AG04449 (cell line): ENCODE measurements at regions of chr2 and their contacts with region 1.

Region 1: DNA sequence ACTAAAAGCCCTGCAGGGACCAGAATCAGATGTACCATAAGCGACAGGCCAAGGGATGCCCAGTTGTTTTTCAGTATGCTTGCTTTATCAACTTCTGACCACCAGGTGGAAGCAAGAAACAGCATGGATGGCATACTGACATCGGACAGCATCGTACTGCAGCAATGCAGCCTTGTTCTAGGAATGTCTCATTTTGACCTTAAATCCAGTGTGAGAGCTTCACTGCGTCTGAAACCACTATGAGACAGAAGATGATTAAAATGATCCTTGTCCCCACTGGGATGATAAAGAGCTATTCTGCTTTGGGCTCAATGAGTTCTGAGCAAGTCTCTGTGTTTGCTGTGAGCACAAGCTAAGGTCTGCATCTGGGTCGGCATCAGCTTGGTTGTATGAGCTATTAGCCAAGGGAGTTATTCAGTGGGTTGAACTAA is 54.3 kb downstream of the CDK15 start:
- DNase-seq: peak; percentile 54
- H3K4me3 ChIP-seq: no peak overlapping the region
- CTCF ChIP-seq: peak; percentile 83

Region 2: DNA sequence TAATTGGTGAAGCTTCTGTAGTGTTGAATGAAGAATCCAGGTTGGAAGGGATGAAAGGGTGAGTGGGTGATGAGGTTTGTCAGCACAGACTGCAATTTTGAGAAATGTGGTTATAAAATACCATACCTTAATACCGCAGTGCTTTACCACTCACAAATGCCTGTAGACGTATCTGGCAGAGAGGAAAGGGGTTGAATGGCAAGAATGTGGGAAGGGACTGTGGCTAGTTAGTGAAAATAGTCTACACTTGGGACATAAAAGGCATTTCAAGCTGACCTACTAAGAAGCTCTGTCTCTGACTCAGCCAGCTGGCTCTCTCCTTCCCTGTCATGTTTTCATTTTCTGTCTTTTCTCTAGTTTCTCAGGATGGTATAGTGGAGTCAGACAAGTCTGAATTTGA is 29.2 kb before region 1 on chr2:
- CTCF ChIA-PET with region 1: interaction called, 10 read pairs
- POLR2A ChIA-PET with region 1: no interaction called
- DNase-seq: peak; percentile 97
- H3K4me3 ChIP-seq: no peak overlapping the region
- CTCF ChIP-seq: no peak

Region 3: GRCh38 chr2:201882353-201883090 is 21.9 kb after region 1 on chr2:
- CTCF ChIA-PET with region 1: interaction called, 13 read pairs
- POLR2A ChIA-PET with region 1: interaction called, 10 read pairs
- DNase-seq: no peak
- H3K4me3 ChIP-seq: no peak overlapping the region
- CTCF ChIP-seq: no peak

Region 4: DNA sequence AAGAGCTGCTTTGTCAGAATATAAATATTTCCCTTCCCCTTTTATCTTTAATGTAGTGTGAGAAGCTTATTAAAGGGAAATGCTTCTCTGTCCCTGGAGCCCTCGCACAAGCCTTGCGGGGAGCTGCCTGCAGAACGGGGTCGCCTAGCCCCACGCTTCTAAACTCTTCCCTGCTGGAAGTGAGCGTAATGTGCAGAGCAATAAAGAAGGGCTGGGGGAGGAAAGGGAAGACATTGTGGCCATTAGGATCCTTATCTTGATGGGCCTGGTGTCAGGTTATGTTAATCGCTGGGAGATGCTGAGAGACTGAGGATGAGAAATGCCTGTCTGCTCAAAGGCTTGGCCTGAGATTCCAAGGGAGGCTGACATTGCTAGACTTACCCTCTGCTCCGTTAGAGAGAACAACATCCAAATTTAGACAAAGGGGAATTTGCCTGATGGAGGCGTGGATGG is 154.1 kb after region 1 on chr2:
- CTCF ChIA-PET with region 1: interaction called, 22 read pairs
- POLR2A ChIA-PET with region 1: no interaction called
- DNase-seq: no peak
- H3K4me3 ChIP-seq: no peak overlapping the region
- CTCF ChIP-seq: no peak

Region 5: DNA sequence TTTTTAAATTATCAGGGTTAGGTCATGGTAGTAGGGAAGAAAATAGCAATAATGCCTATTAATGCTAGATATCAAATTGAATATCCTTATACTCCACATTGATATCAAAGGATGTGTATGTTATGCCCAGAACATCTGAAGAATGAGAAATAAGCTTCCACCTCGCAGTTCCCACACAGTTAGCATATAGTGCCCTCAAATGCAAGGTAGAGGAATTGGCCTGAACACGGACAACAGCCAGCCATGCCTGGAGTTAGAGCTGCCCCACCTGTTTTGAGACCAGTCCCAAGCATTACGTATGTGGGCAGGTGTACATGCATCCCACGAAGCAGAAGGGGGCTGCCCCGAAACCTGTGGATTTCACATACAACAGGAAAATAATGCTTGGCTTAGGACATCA is 298.1 kb after region 1 on chr2:
- CTCF ChIA-PET with region 1: interaction called, 26 read pairs
- POLR2A ChIA-PET with region 1: no interaction called
- DNase-seq: no peak
- H3K4me3 ChIP-seq: no peak overlapping the region
- CTCF ChIP-seq: peak; percentile 66

Region 6: GRCh38 chr2:203527719-203528118 is 1667.1 kb after region 1 on chr2:
- CTCF ChIA-PET with region 1: no interaction called
- POLR2A ChIA-PET with region 1: no interaction called
- DNase-seq: no peak
- H3K4me3 ChIP-seq: no peak overlapping the region
- CTCF ChIP-seq: no peak